CD14-positive monocyte (primary cell): ENCODE measurements at regions of chr2 and their contacts with region 1.

Region 1: DNA sequence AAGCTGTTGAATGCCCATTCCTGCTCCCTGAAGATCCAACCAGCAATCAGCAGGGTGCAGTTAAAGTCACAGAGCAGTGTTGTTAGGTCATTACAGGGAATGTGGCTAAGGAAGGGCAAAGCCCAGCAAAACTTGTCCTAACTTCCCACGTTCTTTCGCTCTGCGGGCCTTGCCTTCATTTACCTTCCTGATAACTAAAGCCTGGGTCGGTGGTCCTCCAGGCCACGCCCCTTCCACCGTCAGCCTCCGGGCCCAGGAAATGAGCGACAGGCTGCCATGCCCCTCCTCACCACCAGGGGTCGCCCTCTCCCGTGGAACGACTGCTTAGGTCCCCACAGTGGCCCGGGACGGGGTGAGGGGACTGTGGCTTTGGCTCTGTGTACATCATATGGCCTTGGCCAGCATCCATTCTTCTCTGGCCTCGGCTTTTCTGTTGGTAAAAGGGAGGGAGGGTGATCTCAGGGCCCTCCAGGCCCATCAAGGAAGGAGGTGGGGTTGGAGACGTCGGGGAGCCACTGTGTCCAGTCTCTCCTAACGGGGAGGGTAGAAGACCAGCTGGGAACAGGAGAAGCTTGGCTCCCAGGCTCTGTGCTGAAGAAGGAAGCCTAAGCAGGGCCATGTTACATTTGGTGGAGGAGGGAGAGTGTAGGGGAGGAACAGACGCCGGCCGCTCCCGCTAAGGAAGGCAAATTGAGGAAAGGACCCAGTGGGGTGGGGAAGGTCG is 2.2 kb downstream of the SH2D6 start:
- DNase-seq: peak; percentile 84 to 86 (median 86)
- H3K4me3 ChIP-seq: peak overlapping the region in 1 of 3 experiments; percentile 40
- H3K4me3 Mint-ChIP-seq: peak overlapping the region; percentile 64 to 76
- H3K27ac ChIP-seq: peak overlapping the region in 1 of 2 donors; percentile 68
- H3K27ac Mint-ChIP-seq: peak overlapping the region; percentile 51 to 94 (median 87)
- H3K4me1 ChIP-seq: peaks cover 44 to 56% of the 10 kb centered on the region in 2 donors
- H3K4me1 Mint-ChIP-seq: peaks cover 52% of the 10 kb centered on the region
- H3K27me3 ChIP-seq: no peaks in the 10 kb centered on the region
- H3K27me3 Mint-ChIP-seq: peaks cover 0 to 3% (median 0%) of the 10 kb centered on the region in 3 donors
- CTCF ChIP-seq: peak; percentile 99

Region 2: DNA sequence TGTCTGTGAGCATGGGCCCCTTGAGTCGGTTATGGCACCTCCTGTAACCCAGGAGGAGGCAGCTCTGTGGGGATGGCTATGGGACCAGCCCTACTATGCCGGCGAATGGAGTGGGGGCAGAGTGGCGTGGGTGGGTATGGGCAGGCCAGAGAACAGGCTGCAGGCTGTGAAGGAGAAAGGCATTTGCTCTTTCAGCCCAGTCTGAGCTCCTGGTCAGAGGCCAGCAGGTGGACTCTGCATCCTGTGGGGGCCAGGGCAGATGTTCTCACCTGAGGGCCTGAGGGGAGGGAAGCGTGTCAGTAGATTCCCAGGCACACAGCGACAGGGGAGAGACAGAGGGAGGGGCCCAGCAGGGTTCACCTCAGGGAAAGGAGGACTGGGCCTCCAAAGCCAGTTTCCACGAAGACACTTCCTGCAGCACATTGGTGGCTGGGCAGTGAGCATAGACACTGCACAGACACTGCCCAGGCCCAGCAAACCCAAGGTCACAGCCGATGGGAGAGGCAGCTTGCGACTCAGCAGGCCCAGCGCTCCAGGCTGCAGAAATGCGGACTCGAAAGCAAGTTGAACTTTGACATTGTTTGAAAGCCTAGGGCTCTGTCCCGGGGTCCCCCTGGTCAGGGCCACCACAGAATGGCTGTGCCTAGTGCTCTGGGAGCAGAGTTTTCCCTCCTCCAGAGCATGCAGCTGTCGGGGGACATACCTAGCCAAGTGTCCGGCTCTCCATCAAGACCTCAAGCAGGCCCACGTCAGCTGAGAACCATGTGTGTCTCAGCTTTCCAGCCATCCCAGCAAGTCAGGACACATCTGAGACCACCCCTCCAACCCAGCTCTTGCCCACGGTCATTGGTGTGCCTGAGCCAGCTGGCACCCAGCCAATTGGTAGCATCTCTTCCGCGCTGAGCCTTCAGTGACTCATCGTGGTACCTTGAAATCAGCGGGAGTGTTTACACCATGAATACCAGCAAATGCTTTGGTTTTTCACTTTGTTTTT is 146.7 kb before region 1 on chr2:
- intact Hi-C with region 1: no loop called
- DNase-seq: no peak
- H3K4me3 ChIP-seq: no peak overlapping the region
- H3K4me3 Mint-ChIP-seq: no peak overlapping the region
- H3K27ac ChIP-seq: no peak overlapping the region
- H3K27ac Mint-ChIP-seq: peak overlapping the region in 1 of 7 donors; percentile 68
- H3K4me1 ChIP-seq: no peaks in the 10 kb centered on the region
- H3K4me1 Mint-ChIP-seq: no peaks in the 10 kb centered on the region
- H3K27me3 ChIP-seq: no peaks in the 10 kb centered on the region
- H3K27me3 Mint-ChIP-seq: peaks cover 4 to 12% (median 5%) of the 10 kb centered on the region in 3 donors
- CTCF ChIP-seq: no peak

Region 3: GRCh38 chr2:85538486-85539360 is 118.0 kb after region 1 on chr2 and contains the start of gene MAT2A:
- intact Hi-C with region 1: loop called in 1 of 2 experiments (anchors 5 kb)
- DNase-seq: peak; percentile 83 to 88 (median 88)
- H3K4me3 ChIP-seq: peak within 1 kb of the TSS; percentile 68 to 99 (median 95)
- H3K4me3 Mint-ChIP-seq: peak within 1 kb of the TSS; percentile 91 to 95
- H3K27ac ChIP-seq: peak within 1 kb of the TSS; percentile 88 to 98
- H3K27ac Mint-ChIP-seq: peak within 1 kb of the TSS; percentile 95 to 98 (median 97)
- H3K4me1 ChIP-seq: peaks cover 35 to 64% of the 10 kb centered on the region in 2 donors
- H3K4me1 Mint-ChIP-seq: peaks cover 57% of the 10 kb centered on the region
- H3K27me3 ChIP-seq: no peaks in the 10 kb centered on the region
- H3K27me3 Mint-ChIP-seq: no peaks in the 10 kb centered on the region
- CTCF ChIP-seq: peak; percentile 62
- polyA plus RNA-seq, gene MAT2A: 97.0 to 454 (median 117) TPM

Region 4: DNA sequence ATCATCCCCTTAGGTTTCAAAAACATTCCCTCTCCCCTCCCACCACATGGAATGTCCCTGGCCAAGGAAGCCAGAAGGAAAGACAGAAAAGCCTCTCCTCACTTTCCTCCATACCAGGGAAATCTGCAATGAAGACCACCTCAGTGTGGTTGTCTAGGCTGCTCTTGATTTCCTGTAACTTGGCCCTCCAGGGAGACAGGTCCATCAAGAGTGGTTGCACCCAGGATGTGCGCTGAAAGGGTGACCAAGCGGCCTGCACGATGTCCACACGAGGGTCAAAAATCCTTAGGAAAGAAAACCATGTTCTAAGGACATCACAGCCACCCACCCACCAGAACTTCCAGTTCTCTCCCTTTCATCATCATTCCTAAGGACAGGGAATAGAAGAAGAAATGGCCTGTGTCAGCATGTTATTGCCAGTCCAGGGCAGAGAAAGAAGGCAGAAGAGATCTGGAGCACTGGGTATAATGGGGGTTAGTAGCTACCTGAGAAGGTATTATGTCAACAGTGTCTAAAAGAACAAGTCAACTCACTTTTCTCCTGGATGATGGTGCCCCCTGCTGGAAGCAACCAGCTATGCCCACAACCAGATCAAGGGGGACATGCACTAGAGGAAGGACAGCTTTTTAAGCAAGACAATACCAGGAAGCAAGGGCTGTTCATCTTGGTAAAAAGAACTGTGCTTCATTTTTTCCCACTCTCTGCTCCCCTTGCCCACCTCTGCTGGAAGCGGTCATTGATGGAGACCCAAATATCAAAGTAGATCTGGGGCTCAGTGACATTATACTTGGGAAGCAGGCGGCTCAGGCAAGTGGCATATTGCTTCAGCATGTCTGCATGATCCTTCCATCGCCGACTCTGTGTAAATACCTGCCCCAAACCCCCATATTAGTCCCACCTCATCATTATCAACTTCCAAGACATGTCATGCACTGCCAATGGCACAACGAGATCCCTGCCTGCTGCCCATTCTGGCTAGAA is 131.3 kb after region 1 on chr2:
- intact Hi-C with region 1: loop called (anchors 1 to 2 kb)
- DNase-seq: peak; percentile 71 to 83 (median 79)
- H3K4me3 ChIP-seq: no peak overlapping the region
- H3K4me3 Mint-ChIP-seq: no peak overlapping the region
- H3K27ac ChIP-seq: peak overlapping the region in 1 of 2 donors; percentile 61
- H3K27ac Mint-ChIP-seq: peak overlapping the region; percentile 3 to 80 (median 67)
- H3K4me1 ChIP-seq: peaks cover 19 to 27% of the 10 kb centered on the region in 2 donors
- H3K4me1 Mint-ChIP-seq: peaks cover 28% of the 10 kb centered on the region
- H3K27me3 ChIP-seq: no peaks in the 10 kb centered on the region
- H3K27me3 Mint-ChIP-seq: peaks cover 0 to 2% (median 0%) of the 10 kb centered on the region in 3 donors
- CTCF ChIP-seq: peak; percentile 89

Region 5: GRCh38 chr2:85611705-85612587 is 191.2 kb after region 1 on chr2 and contains the start of gene C2orf68:
- intact Hi-C with region 1: loop called in 1 of 2 experiments (anchors 10 kb)
- DNase-seq: peak; percentile 77 to 79 (median 78)
- H3K4me3 ChIP-seq: peak within 1 kb of the TSS; percentile 57 to 93 (median 86)
- H3K4me3 Mint-ChIP-seq: peak within 1 kb of the TSS; percentile 97 to 100
- H3K27ac ChIP-seq: peak within 1 kb of the TSS; percentile 71 to 87
- H3K27ac Mint-ChIP-seq: peak within 1 kb of the TSS; percentile 82 to 94 (median 92)
- H3K4me1 ChIP-seq: peaks cover 27 to 39% of the 10 kb centered on the region in 2 donors
- H3K4me1 Mint-ChIP-seq: peaks cover 27% of the 10 kb centered on the region
- H3K27me3 ChIP-seq: no peaks in the 10 kb centered on the region
- H3K27me3 Mint-ChIP-seq: peaks cover 0 to 1% (median 0%) of the 10 kb centered on the region in 3 donors
- CTCF ChIP-seq: no peak
- polyA plus RNA-seq, gene C2orf68: 24.2 to 32.9 (median 30.7) TPM

Region 6: GRCh38 chr2:86562922-86563649 is 1142.4 kb after region 1 on chr2 and contains the start of gene CHMP3:
- intact Hi-C with region 1: loop called in 1 of 2 experiments (anchors 10 kb)
- DNase-seq: peak; percentile 98 to 99 (median 99)
- H3K4me3 ChIP-seq: peak within 1 kb of the TSS; percentile 57 to 98 (median 84)
- H3K4me3 Mint-ChIP-seq: peak within 1 kb of the TSS; percentile 89 to 97
- H3K27ac ChIP-seq: peak within 1 kb of the TSS; percentile 99 to 100
- H3K27ac Mint-ChIP-seq: peak within 1 kb of the TSS; percentile 99 to 100 (median 100)
- H3K4me1 ChIP-seq: peaks cover 20 to 33% of the 10 kb centered on the region in 2 donors
- H3K4me1 Mint-ChIP-seq: peaks cover 34% of the 10 kb centered on the region
- H3K27me3 ChIP-seq: no peaks in the 10 kb centered on the region
- H3K27me3 Mint-ChIP-seq: peaks cover 0 to 6% (median 2%) of the 10 kb centered on the region in 3 donors
- CTCF ChIP-seq: no peak
- polyA plus RNA-seq, gene CHMP3: 45.4 to 115 (median 99.4) TPM